HepG2 (cell line): ENCODE measurements at regions of chr4 and their contacts with region 1.

Region 1: GRCh38 chr4:102826890-102827673 is at the start of gene UBE2D3:
- DNase-seq: peak; percentile 81
- ATAC-seq: peak; percentile 64
- H3K4me3 ChIP-seq: peak within 1 kb of the TSS; percentile 92 to 97 (median 95)
- H3K27ac ChIP-seq: peak within 1 kb of the TSS; percentile 97
- H3K4me1 ChIP-seq: peaks cover 42% of the 10 kb centered on the region
- H3K27me3 ChIP-seq: peaks cover 0 to 2% of the 10 kb centered on the region in 2 experiments; a peak in 1 of 5 replicates
- CTCF ChIP-seq: peak; percentile 49
- EP300 ChIP-seq: no peak
- POLR2A ChIP-seq: peak; percentile 60 to 79; a peak in 2 of 4 replicates
- RAD21 ChIP-seq: peak; percentile 58
- total RNA-seq, gene UBE2D3: 224 and 265 TPM in 2 replicates

Region 2: DNA sequence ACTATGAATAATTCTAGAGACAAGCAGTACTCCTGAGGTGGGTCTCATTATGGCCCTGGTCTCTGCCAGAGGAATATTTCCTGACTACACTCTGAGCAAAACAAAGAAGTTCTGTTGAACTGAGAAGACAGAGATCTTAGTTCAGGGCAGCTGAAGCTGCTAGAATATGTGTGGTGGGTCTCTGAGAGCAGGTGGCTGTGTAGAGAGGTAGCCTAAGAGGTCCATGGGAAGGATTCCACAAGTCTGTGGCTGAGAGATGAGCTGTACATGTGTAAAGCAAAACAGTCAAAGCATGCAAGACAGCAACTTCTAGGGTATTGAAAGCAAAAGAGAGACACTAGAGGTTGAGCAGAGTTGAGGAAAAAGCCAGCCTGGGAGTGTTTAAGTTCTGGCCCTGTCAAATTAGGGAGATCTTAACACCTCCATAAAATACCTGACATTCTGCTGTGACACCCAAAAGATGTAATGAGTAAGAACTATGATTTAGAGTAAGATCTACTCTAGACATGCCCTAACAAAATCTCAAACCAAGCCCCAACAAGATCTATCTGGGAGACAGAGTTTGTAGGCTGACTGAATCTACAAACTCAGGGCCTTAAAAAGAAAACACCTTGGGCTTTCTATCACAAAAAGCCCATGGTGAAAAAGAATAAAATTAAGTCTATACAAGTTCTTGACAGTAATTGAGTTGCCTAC is 762.2 kb before region 1 on chr4:
- CTCF ChIA-PET with region 1: no interaction called
- POLR2A ChIA-PET with region 1: no interaction called
- in situ Hi-C with region 1: no loop called
- intact Hi-C with region 1: no loop called
- DNase-seq: no peak
- ATAC-seq: no peak
- H3K4me3 ChIP-seq: no peak overlapping the region
- H3K27ac ChIP-seq: no peak overlapping the region
- H3K4me1 ChIP-seq: no peaks in the 10 kb centered on the region
- H3K27me3 ChIP-seq: no peaks in the 10 kb centered on the region
- CTCF ChIP-seq: no peak
- EP300 ChIP-seq: no peak
- POLR2A ChIP-seq: no peak
- RAD21 ChIP-seq: no peak

Region 3: DNA sequence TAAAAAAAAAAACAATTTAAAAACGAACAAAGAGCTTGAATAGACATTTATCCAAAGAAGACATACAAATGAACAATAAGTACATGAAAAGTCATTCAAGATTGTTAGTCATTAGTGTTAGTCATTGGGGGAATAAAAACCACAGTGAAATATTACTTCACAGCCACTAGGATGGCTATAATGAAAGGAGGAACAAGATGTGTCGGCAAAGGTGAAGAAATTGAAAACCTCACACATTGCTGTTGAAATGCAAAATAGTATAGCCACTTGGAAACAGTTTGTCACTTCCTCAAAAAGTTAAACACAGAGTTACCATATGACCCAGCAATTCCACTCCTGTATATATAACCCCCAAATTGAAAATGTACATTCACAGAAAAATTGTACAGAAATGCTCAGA is 436.6 kb before region 1 on chr4:
- CTCF ChIA-PET with region 1: no interaction called
- POLR2A ChIA-PET with region 1: no interaction called
- in situ Hi-C with region 1: no loop called
- intact Hi-C with region 1: no loop called
- DNase-seq: no peak
- ATAC-seq: no peak
- H3K4me3 ChIP-seq: no peak overlapping the region
- H3K27ac ChIP-seq: no peak overlapping the region
- H3K4me1 ChIP-seq: no peaks in the 10 kb centered on the region
- H3K27me3 ChIP-seq: no peaks in the 10 kb centered on the region
- CTCF ChIP-seq: no peak
- EP300 ChIP-seq: no peak
- POLR2A ChIP-seq: no peak
- RAD21 ChIP-seq: no peak

Region 4: DNA sequence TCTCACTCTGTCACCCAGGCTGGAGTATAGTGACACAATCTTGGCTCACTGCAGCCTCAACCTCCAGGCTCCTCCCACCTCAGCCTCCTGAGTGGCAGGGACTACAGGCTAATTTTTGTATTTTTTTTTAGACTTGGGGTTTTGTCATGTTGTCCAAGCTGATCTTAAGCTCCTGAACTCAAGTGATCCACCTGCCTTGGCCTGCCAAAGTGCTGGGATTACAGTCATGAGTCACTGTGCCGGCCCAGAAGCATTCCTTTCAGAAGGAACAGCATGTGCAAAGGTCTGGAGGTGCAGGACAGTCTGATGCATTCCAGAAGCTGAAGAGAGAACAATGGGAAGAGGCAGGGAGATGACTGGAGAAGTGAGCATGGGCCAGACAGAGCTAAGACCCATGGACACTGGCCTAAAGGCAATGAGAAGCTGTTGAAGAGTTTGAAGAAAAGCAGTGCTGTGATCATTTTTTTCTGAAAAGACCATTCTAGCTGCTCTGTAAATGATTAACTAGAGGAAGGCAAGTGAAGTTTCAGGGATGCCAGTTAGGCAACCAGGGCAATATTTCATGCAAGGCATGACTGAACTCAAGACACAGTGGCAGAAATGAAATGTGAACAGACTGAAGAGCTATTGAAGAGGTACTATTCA is 109.5 kb before region 1 on chr4:
- CTCF ChIA-PET with region 1: no interaction called
- POLR2A ChIA-PET with region 1: interaction called, 14 read pairs
- in situ Hi-C with region 1: no loop called
- intact Hi-C with region 1: no loop called
- DNase-seq: peak; percentile 73
- ATAC-seq: peak; percentile 85
- H3K4me3 ChIP-seq: no peak overlapping the region
- H3K27ac ChIP-seq: peak overlapping the region; percentile 23
- H3K4me1 ChIP-seq: peaks cover 57% of the 10 kb centered on the region
- H3K27me3 ChIP-seq: no peaks in the 10 kb centered on the region
- CTCF ChIP-seq: no peak
- EP300 ChIP-seq: no peak
- POLR2A ChIP-seq: no peak
- RAD21 ChIP-seq: no peak

Region 5: GRCh38 chr4:102809190-102809589 is 17.9 kb before region 1 on chr4:
- CTCF ChIA-PET with region 1: no interaction called
- POLR2A ChIA-PET with region 1: interaction called, 12 read pairs
- in situ Hi-C with region 1: no loop called
- intact Hi-C with region 1: no loop called
- DNase-seq: no peak
- ATAC-seq: no peak
- H3K4me3 ChIP-seq: no peak overlapping the region
- H3K27ac ChIP-seq: no peak overlapping the region
- H3K4me1 ChIP-seq: peaks cover 21% of the 10 kb centered on the region
- H3K27me3 ChIP-seq: no peaks in the 10 kb centered on the region
- CTCF ChIP-seq: no peak
- EP300 ChIP-seq: no peak
- POLR2A ChIP-seq: no peak
- RAD21 ChIP-seq: no peak

Region 6: GRCh38 chr4:102849579-102850104 is 22.6 kb after region 1 on chr4:
- CTCF ChIA-PET with region 1: no interaction called
- POLR2A ChIA-PET with region 1: interaction called, 20 read pairs
- in situ Hi-C with region 1: no loop called
- intact Hi-C with region 1: no loop called
- DNase-seq: no peak
- ATAC-seq: no peak
- H3K4me3 ChIP-seq: no peak overlapping the region
- H3K27ac ChIP-seq: no peak overlapping the region
- H3K4me1 ChIP-seq: peaks cover 11% of the 10 kb centered on the region
- H3K27me3 ChIP-seq: no peaks in the 10 kb centered on the region
- CTCF ChIP-seq: no peak
- EP300 ChIP-seq: no peak
- POLR2A ChIP-seq: no peak
- RAD21 ChIP-seq: no peak

Region 7: DNA sequence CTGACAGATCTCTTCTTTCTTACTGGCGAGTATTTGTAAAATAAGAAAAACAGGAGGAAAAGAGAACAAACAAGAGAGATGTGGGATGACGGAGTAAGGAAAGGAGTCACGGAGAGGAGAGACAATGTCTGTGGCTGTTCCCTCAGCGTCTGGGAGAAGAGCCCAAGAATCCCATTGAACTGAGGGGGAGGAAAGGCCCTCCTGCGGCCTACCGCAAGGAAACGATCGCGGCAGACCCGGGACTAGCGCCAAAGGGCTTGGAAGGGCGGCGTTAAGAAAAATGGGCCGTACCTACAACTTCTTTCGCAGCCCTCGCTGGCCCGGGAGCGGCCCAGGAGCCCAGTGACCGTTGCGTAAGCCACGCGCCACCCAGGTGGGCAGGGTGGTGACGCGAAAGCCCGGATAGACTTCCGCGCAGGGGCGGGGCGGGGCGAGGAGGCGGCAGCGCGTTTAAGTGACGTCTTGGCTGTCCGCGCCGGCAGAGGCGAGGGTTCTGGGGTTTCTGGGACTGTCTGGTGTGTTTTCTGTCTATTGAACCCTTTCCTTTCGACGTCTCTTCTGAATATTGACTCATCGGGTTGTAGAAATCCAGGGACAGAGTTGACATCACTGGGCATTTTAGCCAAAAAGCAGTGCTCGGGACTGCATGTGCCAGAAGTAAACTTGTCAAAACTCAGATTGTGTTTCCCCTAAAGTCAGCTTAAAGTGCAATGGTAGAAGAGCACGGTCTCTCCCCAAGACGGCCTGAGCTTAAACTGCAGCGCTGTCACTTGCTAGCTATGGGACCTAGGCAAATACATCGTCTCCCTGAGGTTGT is 192.4 kb after region 1 on chr4 and contains the start of gene SLC9B1:
- CTCF ChIA-PET with region 1: no interaction called
- POLR2A ChIA-PET with region 1: interaction called, 5 read pairs
- in situ Hi-C with region 1: no loop called
- intact Hi-C with region 1: loop called (anchors 2 kb)
- DNase-seq: peak; percentile 77
- ATAC-seq: peak; percentile 96
- H3K4me3 ChIP-seq: peak within 1 kb of the TSS; percentile 68 to 81 (median 76)
- H3K27ac ChIP-seq: peak within 1 kb of the TSS; percentile 79
- H3K4me1 ChIP-seq: peaks cover 11% of the 10 kb centered on the region
- H3K27me3 ChIP-seq: no peaks in the 10 kb centered on the region; a peak in 1 of 5 replicates
- CTCF ChIP-seq: peak; percentile 24; the same call in 1 of the 2 replicates
- EP300 ChIP-seq: peak in 1 of 2 experiments; percentile 55; a peak in 2 of 4 replicates
- POLR2A ChIP-seq: peak; percentile 75 to 76
- RAD21 ChIP-seq: peak; percentile 13; the same call in 1 of the 2 replicates
- total RNA-seq, gene SLC9B1: 0.20 TPM in 1 of 2 replicates, not detected in the other

Region 8: DNA sequence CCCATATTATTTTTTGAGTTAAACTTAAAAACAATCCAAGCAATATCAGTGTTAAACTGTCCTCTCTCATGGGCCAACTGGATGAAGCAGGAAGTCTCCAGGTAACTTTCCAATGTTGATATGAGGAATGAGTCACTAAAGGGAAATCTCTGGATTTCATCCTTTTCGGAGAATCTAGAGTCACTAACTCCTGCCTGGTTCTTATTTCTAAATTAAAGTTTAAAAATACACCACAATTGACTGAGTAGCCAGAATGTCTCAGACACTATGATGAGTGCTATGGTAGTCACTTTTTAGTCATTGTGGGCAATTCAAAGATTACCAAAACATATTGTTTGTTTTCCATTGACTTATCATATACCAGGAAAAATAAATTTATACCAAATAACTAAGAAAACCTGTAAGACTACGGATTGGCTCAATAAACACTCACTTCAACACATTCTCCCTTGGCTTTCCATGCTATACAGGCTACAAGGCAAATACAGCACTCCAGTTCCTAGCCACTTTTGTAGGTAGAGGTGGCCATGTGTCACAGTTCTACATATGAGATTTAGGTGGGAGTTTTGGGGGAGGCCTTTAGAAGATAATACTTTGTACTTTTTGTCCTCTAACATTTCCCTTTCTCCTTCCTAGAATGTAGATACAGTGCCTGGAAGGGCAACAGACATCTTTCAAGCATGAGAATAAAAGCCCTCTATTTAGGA is 240.9 kb after region 1 on chr4:
- CTCF ChIA-PET with region 1: no interaction called
- POLR2A ChIA-PET with region 1: no interaction called
- in situ Hi-C with region 1: no loop called
- intact Hi-C with region 1: no loop called
- DNase-seq: no peak
- ATAC-seq: no peak
- H3K4me3 ChIP-seq: no peak overlapping the region
- H3K27ac ChIP-seq: no peak overlapping the region
- H3K4me1 ChIP-seq: peaks cover 27% of the 10 kb centered on the region
- H3K27me3 ChIP-seq: no peaks in the 10 kb centered on the region
- CTCF ChIP-seq: no peak
- EP300 ChIP-seq: no peak
- POLR2A ChIP-seq: no peak
- RAD21 ChIP-seq: no peak

Region 9: GRCh38 chr4:103207673-103208072 is 380.6 kb after region 1 on chr4:
- CTCF ChIA-PET with region 1: no interaction called
- POLR2A ChIA-PET with region 1: no interaction called
- in situ Hi-C with region 1: no loop called
- intact Hi-C with region 1: no loop called
- DNase-seq: peak; percentile 48
- ATAC-seq: peak; percentile 94
- H3K4me3 ChIP-seq: no peak overlapping the region
- H3K27ac ChIP-seq: no peak overlapping the region
- H3K4me1 ChIP-seq: no peaks in the 10 kb centered on the region
- H3K27me3 ChIP-seq: no peaks in the 10 kb centered on the region; a peak in 1 of 5 replicates
- CTCF ChIP-seq: peak; percentile 76
- EP300 ChIP-seq: no peak
- POLR2A ChIP-seq: no peak
- RAD21 ChIP-seq: 0 out of 2 replicates have a peak, but pooled peaks have one; percentile 16